ENCODE measurements at regions of chr2 and their contacts with region 1.

Region 1: DNA sequence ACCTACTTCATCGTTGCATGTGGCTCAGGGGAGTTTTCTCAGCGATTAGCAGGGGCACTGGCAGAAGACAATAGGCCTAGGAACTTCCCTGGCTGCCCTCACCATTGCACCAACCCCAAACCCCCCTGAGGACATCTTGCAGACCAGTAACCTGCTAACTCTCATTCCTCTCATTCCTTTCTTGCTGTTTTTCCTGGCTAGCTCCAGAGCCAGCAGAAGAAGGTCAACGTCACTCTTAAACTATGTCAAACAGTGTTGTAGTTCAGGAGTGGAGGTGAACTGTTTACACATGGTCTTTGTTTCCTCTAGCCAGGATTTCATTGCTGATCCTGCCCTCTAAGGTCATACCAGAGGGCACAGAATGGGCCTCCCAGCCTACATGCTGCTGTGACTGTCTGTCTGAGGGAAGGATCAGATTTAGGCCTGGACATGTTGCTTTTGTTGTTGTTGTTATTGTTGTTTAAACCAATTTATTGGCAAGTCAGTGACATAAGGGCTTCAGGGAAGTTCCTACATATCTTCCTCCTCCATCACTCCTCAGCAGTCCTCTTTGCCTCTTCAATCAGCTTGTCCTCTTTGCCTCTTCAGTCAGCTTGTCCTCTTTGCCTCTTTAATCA is 471.8 kb upstream of the TNP1 start:
- DNase-seq: no peak
- H3K4me3 ChIP-seq: no peak overlapping the region
- H3K27ac ChIP-seq: peak overlapping the region; percentile 72 to 76
- H3K4me1 ChIP-seq: peaks cover 0 to 6% of the 10 kb centered on the region in 2 donors
- H3K27me3 ChIP-seq: no peaks in the 10 kb centered on the region
- CTCF ChIP-seq: no peak
- POLR2A ChIP-seq: no peak

Region 2: GRCh38 chr2:216698895-216699294 is 632.7 kb before region 1 on chr2:
- intact Hi-C with region 1: loop called (anchors 10 kb)
- DNase-seq: no peak
- H3K4me3 ChIP-seq: no peak overlapping the region
- H3K27ac ChIP-seq: peak overlapping the region; percentile 93 to 95
- H3K4me1 ChIP-seq: no peaks in the 10 kb centered on the region
- H3K27me3 ChIP-seq: no peaks in the 10 kb centered on the region
- CTCF ChIP-seq: peak; percentile 56 to 89 (median 76)
- POLR2A ChIP-seq: no peak

Region 3: DNA sequence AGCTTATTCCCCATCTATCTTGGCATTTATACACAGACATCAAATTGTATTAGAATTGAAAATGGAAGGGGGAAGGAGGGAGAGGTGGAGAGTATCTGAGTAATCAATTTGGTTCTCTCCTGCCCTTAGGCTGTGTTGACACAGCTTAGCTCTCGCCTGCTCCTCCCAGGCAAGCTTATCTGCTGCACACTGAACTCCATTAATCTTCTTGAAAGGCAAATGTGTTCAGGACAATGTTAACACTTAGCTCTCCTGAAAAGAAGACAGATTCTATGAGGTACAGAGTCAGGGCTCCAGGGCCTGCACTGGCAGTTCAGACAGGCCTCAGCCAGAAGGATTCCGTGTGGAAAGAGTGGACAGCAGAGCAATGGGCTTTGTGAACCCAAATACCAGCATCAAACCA is 41.8 kb before region 1 on chr2:
- intact Hi-C with region 1: no loop called
- DNase-seq: no peak
- H3K4me3 ChIP-seq: no peak overlapping the region
- H3K27ac ChIP-seq: peak overlapping the region; percentile 56 to 66
- H3K4me1 ChIP-seq: peaks cover 0 to 3% of the 10 kb centered on the region in 2 donors
- H3K27me3 ChIP-seq: no peaks in the 10 kb centered on the region
- CTCF ChIP-seq: no peak
- POLR2A ChIP-seq: no peak

Measured in uterus (tissue), 4 donors.